Activated CD4-positive, alpha-beta T cell treated with anti-CD3 and anti-CD28 coated beads, Interleukin-2, amount 10 ng/mL, durations not matched to agents 7 days and 5 days (primary cell): ENCODE measurements at regions of chr22 and their contacts with region 1.

Region 1: DNA sequence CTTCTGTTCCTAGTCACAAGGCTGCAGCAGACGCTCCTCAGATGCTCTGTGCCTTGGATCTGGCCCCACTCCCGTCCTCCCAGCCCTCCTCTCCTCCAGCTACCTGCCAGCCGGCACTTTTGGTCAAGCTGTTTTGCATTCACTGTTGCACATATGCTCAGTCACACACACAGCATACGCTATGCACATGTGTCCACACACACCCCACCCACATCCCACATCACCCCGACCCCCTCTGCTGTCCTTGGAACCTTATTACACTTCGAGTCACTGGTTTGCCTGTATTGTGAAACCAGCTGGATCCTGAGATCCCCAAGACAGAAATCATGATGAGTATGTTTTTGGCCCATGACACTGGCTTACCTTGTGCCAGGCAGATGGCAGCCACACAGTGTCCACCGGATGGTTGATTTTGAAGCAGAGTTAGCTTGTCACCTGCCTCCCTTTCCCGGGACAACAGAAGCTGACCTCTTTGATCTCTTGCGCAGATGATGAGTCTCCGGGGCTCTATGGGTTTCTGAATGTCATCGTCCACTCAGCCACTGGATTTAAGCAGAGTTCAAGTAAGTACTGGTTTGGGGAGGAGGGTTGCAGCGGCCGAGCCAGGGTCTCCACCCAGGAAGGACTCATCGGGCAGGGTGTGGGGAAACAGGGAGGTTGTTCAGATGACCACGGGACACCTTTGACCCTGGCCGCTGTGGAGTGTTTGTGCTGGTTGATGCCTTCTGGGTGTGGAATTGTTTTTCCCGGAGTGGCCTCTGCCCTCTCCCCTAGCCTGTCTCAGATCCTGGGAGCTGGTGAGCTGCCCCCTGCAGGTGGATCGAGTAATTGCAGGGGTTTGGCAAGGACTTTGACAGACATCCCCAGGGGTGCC is 109.8 kb downstream of the BCR start:
- DNase-seq: peak; percentile 61
- H3K4me3 Mint-ChIP-seq: no peak overlapping the region
- H3K27ac Mint-ChIP-seq: no peak overlapping the region
- H3K4me1 Mint-ChIP-seq: no peaks in the 10 kb centered on the region
- H3K27me3 Mint-ChIP-seq: no peaks in the 10 kb centered on the region

Region 2: DNA sequence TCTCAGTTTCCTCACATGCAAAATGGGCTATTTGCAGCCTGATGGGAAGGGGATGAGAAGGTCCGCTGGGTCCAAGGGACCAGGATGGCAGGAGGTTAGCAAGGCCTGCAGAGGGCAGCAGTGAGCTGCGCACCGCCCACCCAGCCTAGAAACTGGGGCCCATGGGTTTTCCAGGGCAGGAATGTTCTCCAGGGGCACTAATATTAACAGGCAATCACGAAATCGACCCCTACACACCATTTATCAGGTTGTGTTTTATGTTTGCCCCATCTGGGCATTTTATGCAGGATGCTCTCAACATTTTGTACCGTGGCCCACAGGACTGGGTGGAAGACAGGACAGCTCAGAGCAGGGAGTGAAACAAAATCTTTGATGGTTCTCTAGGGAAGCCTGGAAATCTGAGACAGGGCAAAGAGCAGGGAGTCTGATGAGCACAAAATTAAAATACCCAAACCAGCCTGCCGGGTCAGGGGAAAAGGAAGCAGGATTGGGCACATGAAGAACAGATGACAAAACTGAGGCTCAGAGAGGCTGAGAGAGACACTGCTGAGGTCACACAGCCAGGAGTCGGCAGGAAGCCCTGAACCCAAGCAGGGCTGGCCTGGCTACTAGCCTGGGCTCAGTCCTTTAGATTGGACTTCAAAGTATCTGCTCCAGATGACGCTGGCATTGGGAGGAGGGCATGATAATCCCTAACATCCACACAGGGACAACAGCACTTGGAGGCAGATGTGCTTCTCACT is 111.4 kb before region 1 on chr22:
- CTCF ChIA-PET with region 1: interaction called, 67 read pairs
- POLR2A ChIA-PET with region 1: no interaction called
- DNase-seq: peak; percentile 59
- H3K4me3 Mint-ChIP-seq: peak overlapping the region; percentile 69
- H3K27ac Mint-ChIP-seq: peak overlapping the region; percentile 74
- H3K4me1 Mint-ChIP-seq: peaks cover 54% of the 10 kb centered on the region
- H3K27me3 Mint-ChIP-seq: no peaks in the 10 kb centered on the region